Activated CD4-positive, alpha-beta memory T cell treated with anti-CD3 and anti-CD28 coated beads for 36 hours (primary cell): ENCODE measurements at regions of chr1 and their contacts with region 1.

Region 1: GRCh38 chr1:204398217-204399081 is 13.2 kb downstream of the PPP1R15B start:
- DNase-seq: peak; percentile 63
- H3K4me3 Mint-ChIP-seq: no peak overlapping the region
- H3K27ac Mint-ChIP-seq: peak overlapping the region; percentile 78
- H3K4me1 Mint-ChIP-seq: peaks cover 3% of the 10 kb centered on the region
- H3K27me3 Mint-ChIP-seq: no peaks in the 10 kb centered on the region

Region 2: DNA sequence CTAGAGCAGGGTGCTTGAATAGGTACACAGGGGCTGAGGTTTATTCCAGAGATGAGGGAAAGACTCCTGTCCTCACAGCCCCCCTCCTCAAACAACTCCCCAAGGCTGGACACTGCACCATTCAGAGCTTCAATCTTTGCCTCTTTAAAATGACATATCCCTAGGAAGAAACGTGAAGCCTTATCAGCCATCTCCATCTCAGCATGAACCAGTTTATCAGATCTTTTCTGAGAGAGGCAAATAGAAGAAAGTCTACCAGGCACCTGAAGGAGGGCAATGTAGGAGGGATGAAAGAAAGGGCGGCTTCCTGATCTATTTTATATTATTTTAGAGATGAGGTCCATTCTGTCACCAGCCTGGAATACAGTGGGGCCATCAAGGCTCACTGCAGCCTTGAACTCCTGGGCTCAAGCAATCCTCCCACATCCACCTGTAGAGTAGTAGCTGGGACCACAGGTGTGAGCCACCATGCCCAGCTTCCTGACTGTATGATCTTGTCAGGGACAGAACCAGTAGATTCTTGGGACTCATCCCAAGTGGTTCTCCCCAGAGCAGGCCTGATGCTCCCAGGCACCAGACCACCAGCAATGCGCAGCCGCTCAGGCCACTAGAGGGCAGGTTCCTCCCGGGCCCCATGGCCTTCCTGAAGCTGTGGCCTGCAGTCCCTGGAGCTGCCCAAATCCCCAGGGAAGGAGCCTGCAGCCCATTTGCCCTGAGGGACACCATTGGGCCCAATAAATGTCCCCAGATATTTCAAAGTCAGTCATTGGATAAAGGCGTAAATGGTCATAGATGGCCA is 140.3 kb before region 1 on chr1:
- CTCF ChIA-PET with region 1: interaction called, 13 read pairs
- POLR2A ChIA-PET with region 1: no interaction called
- intact Hi-C with region 1: no loop called
- DNase-seq: peak; percentile 59
- H3K4me3 Mint-ChIP-seq: no peak overlapping the region
- H3K27ac Mint-ChIP-seq: no peak overlapping the region
- H3K4me1 Mint-ChIP-seq: no peaks in the 10 kb centered on the region
- H3K27me3 Mint-ChIP-seq: no peaks in the 10 kb centered on the region

Region 3: DNA sequence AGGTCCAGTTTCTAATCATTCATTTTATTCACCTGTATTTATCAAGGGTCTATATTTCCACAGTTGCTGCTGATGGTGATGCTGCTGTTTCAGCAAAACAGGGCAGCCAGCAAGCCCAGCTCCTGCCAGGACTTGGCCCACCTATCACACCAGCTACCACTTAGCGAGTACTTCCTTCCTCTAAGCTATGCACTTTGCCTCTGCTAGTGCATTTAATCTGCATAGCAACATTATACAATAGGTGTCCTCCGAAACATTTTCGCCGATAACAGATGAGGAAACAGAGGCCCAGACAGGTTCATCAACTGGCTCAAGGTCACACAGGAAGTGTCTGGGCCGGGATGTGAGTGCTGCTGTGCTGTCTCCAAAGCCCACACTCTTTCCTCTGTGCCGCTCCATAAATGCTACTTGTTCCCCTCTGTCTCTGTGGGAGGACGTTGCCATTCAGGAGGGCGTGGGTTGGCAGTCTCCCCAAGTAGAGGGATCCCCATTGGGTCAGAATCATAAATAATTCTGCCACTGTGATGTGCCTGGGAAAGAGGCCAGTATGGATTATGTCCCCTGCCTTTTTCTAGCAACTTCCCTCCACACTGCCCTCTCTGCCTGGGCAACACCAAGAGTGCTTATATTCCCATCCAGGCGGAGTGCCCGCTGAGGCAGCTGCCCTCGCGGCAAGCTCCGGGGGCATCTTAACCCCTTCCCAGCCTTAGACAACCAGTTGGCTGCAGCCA is 29.3 kb before region 1 on chr1:
- CTCF ChIA-PET with region 1: interaction called, 30 read pairs
- POLR2A ChIA-PET with region 1: no interaction called
- intact Hi-C with region 1: no loop called
- DNase-seq: no peak
- H3K4me3 Mint-ChIP-seq: no peak overlapping the region
- H3K27ac Mint-ChIP-seq: no peak overlapping the region
- H3K4me1 Mint-ChIP-seq: peaks cover 13% of the 10 kb centered on the region
- H3K27me3 Mint-ChIP-seq: peaks cover 6% of the 10 kb centered on the region

Region 4: DNA sequence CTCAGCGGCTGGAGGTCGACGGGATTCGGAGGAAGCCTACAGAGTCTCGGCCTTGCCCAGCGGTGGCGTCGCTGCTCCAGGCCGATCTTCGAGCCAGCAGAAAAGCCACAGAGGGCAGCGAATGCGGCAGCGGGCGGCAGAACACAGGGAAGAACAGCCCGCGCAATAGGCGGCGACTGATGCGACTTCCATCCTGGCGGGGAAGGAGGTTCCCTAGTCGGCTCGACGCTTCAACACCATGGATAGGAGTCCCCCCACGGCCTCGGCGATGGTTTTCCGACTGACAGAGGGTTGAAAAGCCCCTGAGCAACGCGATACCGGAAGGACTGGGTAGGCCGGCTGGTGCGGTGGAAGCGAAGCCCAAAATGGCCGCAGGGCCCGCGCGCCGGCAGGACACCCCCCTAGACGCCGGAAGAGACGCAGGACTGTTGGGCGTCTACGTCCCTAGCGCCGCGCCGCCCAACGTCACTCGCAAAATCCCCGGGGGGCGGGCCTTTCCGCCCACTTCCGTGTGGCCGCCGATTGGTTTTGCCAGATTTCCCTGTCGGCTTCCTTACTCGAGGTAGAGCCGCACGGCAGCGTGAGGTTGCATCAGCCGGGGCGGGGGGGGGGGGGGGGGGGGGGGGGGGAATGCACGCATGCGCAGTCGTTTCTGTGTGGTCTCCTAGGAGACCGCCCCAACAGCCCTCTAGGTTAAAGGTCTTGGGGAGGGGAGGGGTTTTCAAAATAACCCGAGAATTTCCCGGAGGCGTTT is 13.2 kb after region 1 on chr1 and contains the start of gene PPP1R15B:
- CTCF ChIA-PET with region 1: interaction called, 84 read pairs
- POLR2A ChIA-PET with region 1: interaction called, 6 read pairs
- intact Hi-C with region 1: no loop called
- DNase-seq: peak; percentile 99
- H3K4me3 Mint-ChIP-seq: peak within 1 kb of the TSS; percentile 99
- H3K27ac Mint-ChIP-seq: peak within 1 kb of the TSS; percentile 98
- H3K4me1 Mint-ChIP-seq: peaks cover 12% of the 10 kb centered on the region
- H3K27me3 Mint-ChIP-seq: no peaks in the 10 kb centered on the region
- total RNA-seq, gene PPP1R15B: 54.9 to 57.1 TPM

Region 5: DNA sequence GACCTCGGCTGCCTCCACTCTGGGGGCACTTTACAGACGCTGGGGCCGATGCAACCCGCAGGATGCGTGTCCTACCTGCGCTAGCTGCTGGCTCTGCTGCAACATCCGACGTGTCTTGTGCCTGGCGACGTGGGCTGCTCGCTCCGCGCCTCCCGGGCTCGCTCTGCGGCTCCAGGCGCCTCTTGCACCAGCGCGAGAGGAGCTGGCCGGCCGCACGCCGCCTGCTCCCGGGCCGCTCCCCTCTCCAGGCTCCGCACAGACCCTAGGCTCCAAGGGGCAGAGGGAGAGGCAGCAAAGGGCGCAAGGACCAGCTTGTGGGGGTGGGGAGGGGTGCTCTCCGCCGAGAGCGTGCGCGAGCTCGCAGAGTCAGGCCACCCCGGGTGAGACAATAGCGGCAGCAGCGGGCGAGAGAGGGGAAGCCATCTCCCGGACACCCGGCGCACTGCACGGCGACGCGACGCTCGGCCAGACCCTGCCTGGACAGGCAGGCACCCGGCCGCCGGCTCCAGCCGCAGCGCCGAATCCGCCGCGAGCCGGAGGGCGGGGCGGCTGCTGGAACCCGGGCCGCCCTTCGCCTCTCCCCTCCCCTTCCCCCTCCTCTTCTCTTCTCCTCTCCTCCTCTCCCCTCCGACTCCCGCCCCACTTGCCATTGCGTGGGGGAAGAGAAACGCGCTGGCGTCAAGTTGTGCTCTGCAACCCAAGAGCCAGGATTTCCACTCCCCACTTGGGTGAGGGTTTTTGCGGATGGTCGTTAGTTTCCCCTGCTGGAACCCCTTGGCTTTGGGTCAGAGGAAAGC is 96.0 kb after region 1 on chr1 and contains the start of gene PIK3C2B:
- CTCF ChIA-PET with region 1: interaction called, 18 read pairs
- POLR2A ChIA-PET with region 1: no interaction called
- intact Hi-C with region 1: no loop called
- DNase-seq: peak; percentile 86
- H3K4me3 Mint-ChIP-seq: peak within 1 kb of the TSS; percentile 84
- H3K27ac Mint-ChIP-seq: peak within 1 kb of the TSS; percentile 92
- H3K4me1 Mint-ChIP-seq: peaks cover 50% of the 10 kb centered on the region
- H3K27me3 Mint-ChIP-seq: no peaks in the 10 kb centered on the region
- total RNA-seq, gene PIK3C2B: 43.4 to 46.4 TPM